Posterior vena cava (tissue), 2 donors: ENCODE measurements at regions of chr6 and their contacts with region 1.

Region 1: DNA sequence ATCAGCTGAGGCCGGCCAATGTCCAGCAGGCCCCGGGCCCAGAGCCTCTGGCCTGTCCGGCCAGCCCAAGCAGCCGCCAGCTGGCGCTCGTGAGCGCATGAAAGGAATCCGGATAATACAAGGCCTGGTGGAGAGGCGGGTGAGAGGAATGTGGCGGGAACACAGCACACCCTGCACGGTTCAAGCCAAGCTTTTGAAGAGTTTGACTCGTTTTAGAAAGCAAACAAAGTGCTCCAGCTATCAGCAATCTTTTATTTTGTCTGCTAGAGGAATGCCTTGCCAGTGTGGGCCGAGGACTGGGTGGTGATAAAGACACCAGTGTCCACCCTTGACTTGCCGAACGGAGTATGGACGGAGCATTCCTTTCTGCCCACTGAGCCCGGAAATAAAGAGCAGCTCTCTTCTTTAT is 9.3 kb upstream of the NEDD9 start:
- DNase-seq: peak; percentile 93

Region 2: GRCh38 chr6:11412011-11412424 is 170.2 kb after region 1 on chr6:
- intact Hi-C with region 1: loop called in 1 of 2 experiments (anchors 5 kb)
- DNase-seq: no peak

Region 3: DNA sequence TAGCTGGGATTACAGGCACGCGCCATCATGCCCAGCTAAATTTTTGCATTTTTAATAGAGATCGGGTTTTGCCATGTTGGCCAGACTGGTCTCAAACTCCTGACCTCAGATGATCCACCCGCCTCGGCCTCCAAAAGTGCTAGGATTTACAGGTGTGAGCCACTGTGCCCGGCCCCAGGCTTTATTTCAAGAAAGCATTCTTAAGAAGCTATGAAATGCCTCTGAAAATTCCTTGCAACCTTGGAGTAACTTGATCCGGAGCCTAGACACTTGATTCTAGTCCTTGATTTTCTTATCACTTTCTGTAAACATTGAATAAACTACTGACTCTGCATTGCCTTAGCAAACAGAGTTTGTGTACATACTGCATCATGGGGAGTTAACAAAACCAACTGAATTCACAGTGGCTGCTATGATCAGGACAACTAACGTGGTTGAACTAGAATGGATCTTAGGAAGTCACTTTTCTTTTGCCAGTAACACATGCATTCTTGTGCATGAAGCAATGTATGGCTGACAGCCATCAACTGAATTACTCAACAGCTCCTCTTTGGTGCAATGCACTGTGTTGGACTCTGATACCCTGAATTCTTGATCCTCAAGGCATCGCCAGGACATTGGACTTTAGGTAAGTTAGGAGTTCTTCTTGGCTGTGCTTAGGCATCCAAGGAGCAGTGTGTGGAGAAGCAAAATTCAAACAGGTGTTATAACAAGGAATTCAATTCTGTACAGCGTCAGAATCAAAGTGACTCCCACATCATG is 192.9 kb after region 1 on chr6:
- intact Hi-C with region 1: loop called in 1 of 2 experiments (anchors 10 kb)
- DNase-seq: no peak